PC-3 (cell line): ENCODE measurements at regions of chr2 and their contacts with region 1.

Region 1: DNA sequence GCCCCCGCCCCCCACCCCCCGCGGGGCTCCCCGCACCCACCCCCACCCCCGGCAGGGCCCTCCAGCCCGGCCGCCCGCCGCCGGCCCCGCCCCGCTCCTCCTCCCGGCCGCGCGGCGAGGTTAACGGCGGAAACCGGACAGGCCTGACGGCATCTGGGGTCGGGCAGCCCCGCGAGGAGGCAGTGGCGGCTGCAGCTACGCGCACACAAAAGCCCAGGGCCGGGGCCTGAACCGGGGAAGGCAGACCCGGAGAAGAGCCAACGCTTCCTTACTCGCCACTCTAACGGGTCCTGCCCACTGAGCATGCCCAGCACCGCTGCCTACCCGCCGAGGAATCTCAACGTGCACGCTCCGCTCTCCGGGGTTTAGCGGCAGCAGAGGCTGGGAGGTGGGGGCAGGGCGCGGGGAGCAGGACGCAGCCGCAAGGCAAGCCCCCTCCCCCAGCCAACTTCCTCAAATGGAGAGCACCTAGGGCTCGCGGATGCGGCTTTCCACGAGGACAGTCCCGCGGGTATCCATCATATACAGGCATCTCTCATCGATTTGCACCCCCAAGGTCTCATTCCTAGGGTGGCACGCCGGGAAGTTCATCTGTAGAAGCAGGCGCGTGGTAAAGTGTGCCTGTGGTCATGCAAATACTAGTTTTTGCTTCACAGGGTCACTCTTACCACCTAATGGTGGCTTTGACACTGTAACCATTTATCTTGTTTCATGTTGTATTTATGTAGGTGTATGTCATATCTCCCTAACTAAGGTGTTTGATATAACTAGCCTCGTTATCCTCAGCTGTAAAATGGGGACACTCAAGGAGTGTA is at the start of gene MEMO1:
- DNase-seq: peak; percentile 90
- ATAC-seq: peak; percentile 68
- H3K4me3 ChIP-seq: peak within 1 kb of the TSS; percentile 98
- H3K27ac ChIP-seq: peak within 1 kb of the TSS; percentile 81
- H3K4me1 ChIP-seq: peaks cover 23% of the 10 kb centered on the region; the same call in 1 of the 2 replicates
- H3K27me3 ChIP-seq: no peaks in the 10 kb centered on the region
- CTCF ChIP-seq: no peak
- total RNA-seq, gene MEMO1: 49.5 and 59.9 TPM in 2 replicates

Region 2: DNA sequence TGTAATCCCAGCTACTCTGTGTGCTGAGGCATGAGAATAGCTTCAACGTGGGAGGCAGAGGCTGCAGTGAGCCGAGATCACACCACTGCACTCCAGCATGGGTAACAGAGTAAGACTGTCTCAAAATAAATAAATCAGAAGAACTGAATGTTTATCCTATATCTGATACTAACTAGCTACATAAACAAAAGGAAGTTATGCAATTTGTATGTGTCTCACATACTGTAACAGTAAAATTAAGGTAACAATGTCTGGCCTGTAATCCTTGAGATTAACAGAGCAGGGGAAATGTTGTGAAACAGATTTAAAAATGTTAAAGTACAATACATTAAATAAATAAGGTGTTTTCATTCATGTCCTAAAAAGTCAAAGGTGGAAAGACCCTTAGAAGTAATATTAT is 150.9 kb before region 1 on chr2:
- CTCF ChIA-PET with region 1: no interaction called
- POLR2A ChIA-PET with region 1: no interaction called
- intact Hi-C with region 1: no loop called
- DNase-seq: no peak
- ATAC-seq: no peak
- H3K4me3 ChIP-seq: no peak overlapping the region
- H3K27ac ChIP-seq: no peak overlapping the region
- H3K4me1 ChIP-seq: no peaks in the 10 kb centered on the region
- H3K27me3 ChIP-seq: no peaks in the 10 kb centered on the region
- CTCF ChIP-seq: no peak

Region 3: DNA sequence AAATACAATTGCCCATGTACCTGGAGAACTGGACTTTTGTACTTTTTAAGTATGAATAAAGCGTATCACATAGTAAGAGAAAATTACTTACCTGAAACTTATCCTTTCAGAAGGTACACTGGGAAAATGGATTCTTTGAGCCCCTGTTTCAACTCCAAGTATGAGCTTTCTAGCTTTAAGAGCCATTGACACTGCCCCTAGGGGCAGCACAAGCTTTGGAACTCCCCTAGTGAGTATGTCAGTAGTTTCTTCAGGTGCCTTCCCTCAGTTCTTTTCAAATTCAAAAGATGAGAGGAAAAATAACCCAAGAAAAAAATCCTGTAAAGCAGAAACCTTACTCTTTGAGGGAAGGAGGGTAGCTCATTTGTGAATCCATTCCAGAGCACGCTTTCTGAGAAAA is 124.2 kb before region 1 on chr2:
- CTCF ChIA-PET with region 1: interaction called, 6 read pairs
- POLR2A ChIA-PET with region 1: no interaction called
- intact Hi-C with region 1: loop called (anchors 5 kb)
- DNase-seq: peak; percentile 50
- ATAC-seq: peak; percentile 61
- H3K4me3 ChIP-seq: no peak overlapping the region
- H3K27ac ChIP-seq: no peak overlapping the region
- H3K4me1 ChIP-seq: no peaks in the 10 kb centered on the region
- H3K27me3 ChIP-seq: no peaks in the 10 kb centered on the region
- CTCF ChIP-seq: peak; percentile 68

Region 4: DNA sequence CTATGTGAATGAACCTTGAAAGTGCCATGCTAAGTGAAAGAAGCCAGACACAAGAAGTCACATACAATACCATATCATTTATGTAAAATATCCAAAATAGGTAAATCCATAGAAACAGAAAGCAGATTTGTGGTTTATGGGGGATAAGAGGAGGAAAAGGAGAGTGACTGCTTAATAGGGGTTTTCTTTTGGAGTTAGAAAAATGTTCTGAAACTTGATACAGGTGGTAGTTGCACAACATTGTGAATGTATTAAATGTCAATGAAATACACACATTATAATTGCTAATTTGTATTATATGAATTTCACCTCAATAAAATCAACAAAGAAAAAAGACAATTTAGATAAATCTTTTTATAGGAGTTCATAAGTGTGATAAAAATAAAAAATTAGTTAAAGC is 37.2 kb before region 1 on chr2:
- CTCF ChIA-PET with region 1: no interaction called
- POLR2A ChIA-PET with region 1: no interaction called
- intact Hi-C with region 1: loop called (anchors 5 kb)
- DNase-seq: no peak
- ATAC-seq: no peak
- H3K4me3 ChIP-seq: no peak overlapping the region
- H3K27ac ChIP-seq: no peak overlapping the region
- H3K4me1 ChIP-seq: no peaks in the 10 kb centered on the region
- H3K27me3 ChIP-seq: no peaks in the 10 kb centered on the region
- CTCF ChIP-seq: no peak

Region 5: GRCh38 chr2:32063310-32064161 is 52.7 kb after region 1 on chr2 and contains the start of gene SPAST:
- CTCF ChIA-PET with region 1: no interaction called
- POLR2A ChIA-PET with region 1: no interaction called
- intact Hi-C with region 1: loop called (anchors 1 kb)
- DNase-seq: peak; percentile 99
- ATAC-seq: peak; percentile 89
- H3K4me3 ChIP-seq: peak within 1 kb of the TSS; percentile 93
- H3K27ac ChIP-seq: peak within 1 kb of the TSS; percentile 48
- H3K4me1 ChIP-seq: peaks cover 19% of the 10 kb centered on the region
- H3K27me3 ChIP-seq: no peaks in the 10 kb centered on the region
- CTCF ChIP-seq: peak; percentile 37; the same call in 1 of the 2 replicates
- total RNA-seq, gene SPAST: 15.5 and 21.6 TPM in 2 replicates

Region 6: GRCh38 chr2:32200814-32201213 is 189.9 kb after region 1 on chr2:
- CTCF ChIA-PET with region 1: no interaction called
- POLR2A ChIA-PET with region 1: no interaction called
- intact Hi-C with region 1: no loop called
- DNase-seq: no peak
- ATAC-seq: no peak
- H3K4me3 ChIP-seq: no peak overlapping the region
- H3K27ac ChIP-seq: no peak overlapping the region
- H3K4me1 ChIP-seq: peaks cover 7% of the 10 kb centered on the region; the same call in 1 of the 2 replicates
- H3K27me3 ChIP-seq: no peaks in the 10 kb centered on the region
- CTCF ChIP-seq: no peak